Prostate gland (tissue), 2 donors: ENCODE measurements at regions of chr18 and their contacts with region 1.

Region 1: GRCh38 chr18:3281456-3282400 is 19.8 kb downstream of the MYL12B start:
- DNase-seq: peak; percentile 50
- H3K4me3 ChIP-seq: no peak overlapping the region
- H3K27ac ChIP-seq: peak overlapping the region; percentile 17 to 78
- H3K4me1 ChIP-seq: peaks cover 5% of the 10 kb centered on the region
- H3K27me3 ChIP-seq: no peaks in the 10 kb centered on the region
- CTCF ChIP-seq: peak; percentile 26 to 88 (median 84)
- POLR2A ChIP-seq: no peak

Region 2: GRCh38 chr18:3585656-3586509 is 304.2 kb after region 1 on chr18:
- intact Hi-C with region 1: loop called (anchors 5 kb)
- DNase-seq: peak; percentile 77
- H3K4me3 ChIP-seq: no peak overlapping the region
- H3K27ac ChIP-seq: no peak overlapping the region
- H3K4me1 ChIP-seq: no peaks in the 10 kb centered on the region
- H3K27me3 ChIP-seq: no peaks in the 10 kb centered on the region
- CTCF ChIP-seq: peak; percentile 42 to 80 (median 76)
- POLR2A ChIP-seq: no peak

Region 3: DNA sequence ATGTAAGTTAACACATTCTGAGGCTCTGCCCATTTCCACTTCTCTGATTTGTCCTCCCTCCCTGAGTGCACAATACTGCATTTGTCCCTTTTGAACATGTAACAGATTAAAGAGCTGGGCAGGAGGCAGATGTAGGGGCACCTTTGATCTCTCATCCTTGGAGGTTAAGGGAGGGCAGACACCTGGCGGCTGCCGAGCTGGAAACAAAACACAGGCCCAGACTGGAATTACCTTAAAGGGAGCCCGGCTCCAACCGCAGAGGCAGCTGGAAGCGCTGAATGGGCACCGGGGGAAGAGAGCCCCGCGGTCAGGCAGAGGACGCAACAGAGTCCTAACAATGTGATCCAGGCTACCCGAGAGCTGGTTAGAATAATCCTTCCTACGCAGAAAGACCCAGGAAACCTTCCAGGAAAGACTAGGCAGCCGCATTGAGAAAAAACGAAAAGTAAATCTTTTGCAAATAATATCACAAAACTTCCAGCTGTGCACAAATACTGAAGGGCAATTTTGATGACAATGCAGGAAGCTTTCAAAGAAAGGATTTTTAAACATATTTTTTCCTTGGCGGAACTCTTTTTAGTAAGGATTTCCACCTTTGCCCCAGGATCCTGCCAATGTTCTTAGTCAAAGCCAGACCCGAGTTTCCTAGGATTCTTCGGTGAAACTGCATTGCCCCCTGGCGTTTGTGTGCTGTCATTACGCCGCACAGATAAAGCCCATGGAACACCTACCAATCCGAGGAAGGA is 384.2 kb after region 1 on chr18:
- intact Hi-C with region 1: loop called (anchors 1 kb)
- DNase-seq: peak; percentile 85
- H3K4me3 ChIP-seq: no peak overlapping the region
- H3K27ac ChIP-seq: peak overlapping the region; percentile 57 to 62
- H3K4me1 ChIP-seq: no peaks in the 10 kb centered on the region
- H3K27me3 ChIP-seq: no peaks in the 10 kb centered on the region
- CTCF ChIP-seq: peak; percentile 76 to 96 (median 95)
- POLR2A ChIP-seq: no peak

Region 4: DNA sequence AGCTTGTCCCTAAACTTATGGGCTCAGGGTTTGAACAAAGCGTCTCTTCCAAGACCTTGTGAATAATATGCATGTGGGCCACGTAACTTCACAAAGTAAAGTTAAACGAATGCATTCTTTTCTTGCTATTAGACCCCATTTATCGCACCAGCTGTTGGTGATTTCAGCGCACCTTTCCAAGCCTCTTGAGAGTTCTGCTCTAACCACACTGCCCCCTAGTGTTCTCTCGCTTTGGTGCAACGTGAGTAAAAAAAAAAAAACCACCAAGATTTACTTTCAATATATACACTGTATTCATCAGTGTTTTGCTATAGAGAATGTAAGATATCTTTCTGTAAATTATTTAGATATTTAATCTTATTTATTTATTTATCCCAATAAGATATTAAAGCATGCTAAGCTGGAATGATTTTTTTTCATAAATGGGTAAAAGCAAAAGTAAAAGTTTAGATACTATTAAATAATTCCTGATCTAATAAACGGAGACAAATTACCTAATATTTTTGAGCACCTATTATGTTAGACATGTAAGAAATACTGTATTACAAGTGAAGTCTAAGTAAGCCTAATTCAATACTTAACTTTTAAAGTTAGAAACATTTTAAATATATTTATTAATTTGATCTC is 713.9 kb after region 1 on chr18:
- intact Hi-C with region 1: loop called (anchors 5 kb)
- DNase-seq: peak; percentile 44
- H3K4me3 ChIP-seq: no peak overlapping the region
- H3K27ac ChIP-seq: no peak overlapping the region
- H3K4me1 ChIP-seq: no peaks in the 10 kb centered on the region
- H3K27me3 ChIP-seq: no peaks in the 10 kb centered on the region
- CTCF ChIP-seq: peak; percentile 55 to 73 (median 60)
- POLR2A ChIP-seq: no peak